HepG2 (cell line): ENCODE measurements at regions of chr7 and their contacts with region 1.

Region 1: GRCh38 chr7:135147899-135148721 is at the start of gene TMEM140:
- DNase-seq: peak; percentile 94
- ATAC-seq: peak; percentile 96
- H3K4me3 ChIP-seq: peak within 1 kb of the TSS; percentile 58 to 71 (median 67)
- H3K27ac ChIP-seq: peak within 1 kb of the TSS; percentile 84
- H3K4me1 ChIP-seq: peaks cover 69% of the 10 kb centered on the region
- H3K27me3 ChIP-seq: no peaks in the 10 kb centered on the region; a peak in 1 of 5 replicates
- CTCF ChIP-seq: no peak; the same call in 1 of the 2 replicates
- EP300 ChIP-seq: peak in 1 of 2 experiments; percentile 72; a peak in 2 of 4 replicates
- POLR2A ChIP-seq: peak; percentile 62 to 66; a peak in 3 of 4 replicates
- RAD21 ChIP-seq: no peak
- total RNA-seq, gene TMEM140: 5.6 and 9.2 TPM in 2 replicates

Region 2: DNA sequence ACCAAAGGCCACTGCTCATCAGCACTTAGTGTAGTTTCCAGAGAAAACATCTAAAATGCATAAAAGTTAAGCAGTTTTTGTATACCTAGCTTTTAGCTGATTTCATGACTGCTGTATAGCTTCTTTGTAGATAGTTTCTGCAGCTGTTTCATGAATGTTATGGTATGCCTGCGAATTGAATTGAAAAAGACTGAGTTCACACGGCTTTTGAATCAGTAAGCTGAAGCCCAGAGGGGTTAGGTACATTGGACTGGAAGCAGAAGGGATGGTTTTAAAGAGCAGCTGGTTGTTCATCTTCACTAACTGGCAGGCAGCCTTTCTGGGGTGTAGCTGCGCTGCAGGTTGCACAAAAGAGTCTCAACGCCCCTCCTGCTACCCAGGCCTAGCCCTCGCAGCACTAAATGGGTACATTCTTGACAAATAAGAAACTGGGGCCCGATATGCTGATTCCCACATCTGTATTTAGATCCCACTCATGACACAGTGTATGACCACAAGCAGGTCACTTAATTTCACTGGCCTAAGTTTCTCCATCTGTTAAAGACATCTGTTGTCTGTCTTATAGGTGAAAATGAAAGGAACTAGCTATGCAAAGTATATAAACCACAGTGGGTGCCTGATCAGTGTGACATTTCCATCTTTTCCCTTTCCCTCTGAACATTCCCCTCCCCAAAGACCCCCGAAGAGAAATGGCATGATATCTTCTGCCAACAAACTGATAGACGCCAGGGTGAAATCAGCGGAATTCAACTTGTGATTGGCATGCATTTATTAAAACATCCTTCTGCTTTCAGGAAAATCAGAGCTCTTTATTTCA is 247.7 kb before region 1 on chr7:
- CTCF ChIA-PET with region 1: no interaction called
- POLR2A ChIA-PET with region 1: interaction called, 6 read pairs
- in situ Hi-C with region 1: no loop called
- intact Hi-C with region 1: loop called (anchors 5 kb)
- DNase-seq: no peak
- ATAC-seq: no peak
- H3K4me3 ChIP-seq: peak overlapping the region in 2 of 3 experiments; percentile 52 to 67; a peak in 1 of 6 replicates
- H3K27ac ChIP-seq: peak overlapping the region; percentile 98
- H3K4me1 ChIP-seq: peaks cover 96% of the 10 kb centered on the region
- H3K27me3 ChIP-seq: no peaks in the 10 kb centered on the region
- CTCF ChIP-seq: no peak
- EP300 ChIP-seq: no peak; a peak in 1 of 4 replicates
- POLR2A ChIP-seq: no peak
- RAD21 ChIP-seq: no peak

Region 3: DNA sequence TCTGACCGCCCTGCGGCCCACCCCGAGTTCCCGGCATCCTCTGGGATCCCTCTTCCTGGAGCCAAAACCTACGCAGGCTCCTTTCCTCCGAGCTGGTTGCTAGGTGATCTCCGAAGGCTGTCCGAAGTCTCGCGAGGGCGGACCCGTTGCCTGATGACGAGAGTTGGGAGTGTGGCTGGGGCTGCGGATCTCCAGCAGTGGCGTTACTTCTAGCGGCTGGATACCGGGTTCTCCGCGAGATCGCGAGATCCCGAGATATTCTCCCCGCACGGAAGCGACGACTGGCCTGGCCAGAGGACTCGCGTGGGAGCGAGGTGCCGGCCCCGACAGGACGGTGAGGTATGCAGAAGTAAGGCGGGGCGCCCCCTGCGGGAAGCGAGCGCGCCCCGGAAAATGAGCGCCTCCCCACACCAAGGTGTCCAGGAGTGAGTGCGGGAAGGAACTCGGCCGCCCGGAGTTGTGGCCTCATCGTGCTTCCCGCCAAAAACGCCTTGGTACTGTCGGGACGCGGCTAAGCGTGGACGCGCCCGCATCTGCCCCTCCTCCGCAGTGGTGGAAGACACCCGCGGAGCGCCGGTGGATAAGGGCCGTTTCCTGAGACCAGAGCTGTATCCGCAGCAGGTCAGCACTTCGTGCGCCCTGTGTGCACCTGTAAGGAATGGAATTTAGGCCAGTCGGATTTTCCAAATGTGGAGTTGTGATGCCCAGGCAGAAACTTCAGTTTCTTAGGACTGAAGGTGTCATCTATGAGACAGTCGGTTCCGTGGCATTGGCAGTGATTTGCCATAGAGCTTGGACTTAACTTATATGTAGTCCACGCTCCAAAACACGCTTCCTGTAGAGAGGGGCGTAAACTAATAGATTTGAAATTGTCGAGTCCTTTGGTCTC is 161.5 kb before region 1 on chr7 and contains the start of gene AGBL3:
- CTCF ChIA-PET with region 1: no interaction called
- POLR2A ChIA-PET with region 1: interaction called, 23 read pairs
- in situ Hi-C with region 1: no loop called
- intact Hi-C with region 1: loop called (anchors 1 kb)
- DNase-seq: peak; percentile 90
- ATAC-seq: peak; percentile 98
- H3K4me3 ChIP-seq: peak within 1 kb of the TSS; percentile 83 to 98 (median 98)
- H3K27ac ChIP-seq: peak within 1 kb of the TSS; percentile 82
- H3K4me1 ChIP-seq: peaks cover 39% of the 10 kb centered on the region
- H3K27me3 ChIP-seq: no peaks in the 10 kb centered on the region; a peak in 2 of 5 replicates
- CTCF ChIP-seq: peak; percentile 88
- EP300 ChIP-seq: no peak
- POLR2A ChIP-seq: peak; percentile 72 to 79; a peak in 3 of 4 replicates
- RAD21 ChIP-seq: peak; percentile 83
- total RNA-seq, gene AGBL3: 5.5 and 7.2 TPM in 2 replicates

Region 4: DNA sequence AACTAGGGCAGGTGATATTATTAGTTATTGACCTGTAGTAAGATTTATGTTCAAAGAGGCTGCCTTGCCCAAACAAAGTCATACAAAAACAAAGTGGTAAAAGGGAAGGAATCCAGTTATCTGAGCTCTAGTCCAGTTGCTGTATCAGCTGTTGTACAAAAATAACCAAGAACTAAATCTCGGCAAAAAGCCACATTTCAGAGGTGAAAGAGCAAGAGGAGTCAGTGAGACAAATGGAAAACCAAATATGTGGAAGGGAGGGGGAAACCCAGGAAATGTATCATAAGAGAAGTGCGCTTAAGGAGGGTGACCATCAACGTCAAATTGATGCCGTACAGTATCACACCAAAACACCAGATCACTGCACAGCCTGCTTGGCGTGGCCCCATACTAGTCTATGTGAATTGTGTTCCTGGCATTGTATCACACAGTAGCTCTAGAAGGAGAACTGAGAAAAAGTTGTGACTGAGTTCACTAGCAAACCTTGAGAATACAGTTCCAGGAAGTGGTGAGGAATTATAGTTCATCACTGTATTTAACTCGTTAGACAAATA is 155.4 kb before region 1 on chr7:
- CTCF ChIA-PET with region 1: no interaction called
- POLR2A ChIA-PET with region 1: interaction called, 14 read pairs
- in situ Hi-C with region 1: no loop called
- intact Hi-C with region 1: loop called (anchors 1 kb)
- DNase-seq: no peak
- ATAC-seq: no peak
- H3K4me3 ChIP-seq: peak overlapping the region in 1 of 3 experiments; percentile 31; a peak in 1 of 6 replicates
- H3K27ac ChIP-seq: peak overlapping the region; percentile 96
- H3K4me1 ChIP-seq: peaks cover 93% of the 10 kb centered on the region
- H3K27me3 ChIP-seq: no peaks in the 10 kb centered on the region; a peak in 1 of 5 replicates
- CTCF ChIP-seq: no peak
- EP300 ChIP-seq: no peak
- POLR2A ChIP-seq: no peak
- RAD21 ChIP-seq: no peak

Region 5: GRCh38 chr7:135095229-135095849 is 52.8 kb before region 1 on chr7:
- CTCF ChIA-PET with region 1: no interaction called
- POLR2A ChIA-PET with region 1: no interaction called
- in situ Hi-C with region 1: no loop called
- intact Hi-C with region 1: loop called (anchors 5 kb)
- DNase-seq: no peak
- ATAC-seq: peak; percentile 28; the same call in 1 of the 3 replicates
- H3K4me3 ChIP-seq: peak overlapping the region in 1 of 3 experiments; percentile 6; a peak in 1 of 6 replicates
- H3K27ac ChIP-seq: no peak overlapping the region
- H3K4me1 ChIP-seq: peaks cover 31% of the 10 kb centered on the region
- H3K27me3 ChIP-seq: no peaks in the 10 kb centered on the region
- CTCF ChIP-seq: no peak
- EP300 ChIP-seq: 0 out of 4 replicates have a peak, but pooled peaks of 1 of the 2 experiments have one; percentile 9
- POLR2A ChIP-seq: no peak
- RAD21 ChIP-seq: no peak

Region 6: DNA sequence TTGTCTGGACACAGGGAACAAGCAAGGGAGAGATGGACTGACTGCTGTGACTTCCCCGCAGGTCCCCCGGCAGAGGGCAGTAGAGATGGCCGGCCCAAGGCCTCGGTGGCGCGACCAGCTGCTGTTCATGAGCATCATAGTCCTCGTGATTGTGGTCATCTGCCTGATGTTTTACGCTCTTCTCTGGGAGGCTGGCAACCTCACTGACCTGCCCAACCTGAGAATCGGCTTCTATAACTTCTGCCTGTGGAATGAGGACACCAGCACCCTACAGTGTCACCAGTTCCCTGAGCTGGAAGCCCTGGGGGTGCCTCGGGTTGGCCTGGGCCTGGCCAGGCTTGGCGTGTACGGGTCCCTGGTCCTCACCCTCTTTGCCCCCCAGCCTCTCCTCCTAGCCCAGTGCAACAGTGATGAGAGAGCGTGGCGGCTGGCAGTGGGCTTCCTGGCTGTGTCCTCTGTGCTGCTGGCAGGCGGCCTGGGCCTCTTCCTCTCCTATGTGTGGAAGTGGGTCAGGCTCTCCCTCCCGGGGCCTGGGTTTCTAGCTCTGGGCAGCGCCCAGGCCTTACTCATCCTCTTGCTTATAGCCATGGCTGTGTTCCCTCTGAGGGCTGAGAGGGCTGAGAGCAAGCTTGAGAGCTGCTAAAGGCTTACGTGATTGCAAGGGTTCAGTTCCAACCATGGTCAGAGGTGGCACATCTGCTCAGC is 16.4 kb after region 1 on chr7:
- CTCF ChIA-PET with region 1: no interaction called
- POLR2A ChIA-PET with region 1: interaction called, 19 read pairs
- in situ Hi-C with region 1: no loop called
- intact Hi-C with region 1: no loop called
- DNase-seq: no peak
- ATAC-seq: peak; percentile 21
- H3K4me3 ChIP-seq: no peak overlapping the region
- H3K27ac ChIP-seq: no peak overlapping the region
- H3K4me1 ChIP-seq: peaks cover 55% of the 10 kb centered on the region
- H3K27me3 ChIP-seq: no peaks in the 10 kb centered on the region; a peak in 1 of 5 replicates
- CTCF ChIP-seq: peak; percentile 34
- EP300 ChIP-seq: no peak
- POLR2A ChIP-seq: peak in 1 of 2 experiments; percentile 44; a peak in 2 of 4 replicates
- RAD21 ChIP-seq: no peak

Region 7: GRCh38 chr7:135170274-135170997 is 22.3 kb after region 1 on chr7 and contains the start of gene CYREN:
- CTCF ChIA-PET with region 1: no interaction called
- POLR2A ChIA-PET with region 1: interaction called, 19 read pairs
- in situ Hi-C with region 1: no loop called
- intact Hi-C with region 1: no loop called
- DNase-seq: peak; percentile 91
- ATAC-seq: peak; percentile 91
- H3K4me3 ChIP-seq: peak within 1 kb of the TSS; percentile 91 to 97 (median 95)
- H3K27ac ChIP-seq: peak within 1 kb of the TSS; percentile 87
- H3K4me1 ChIP-seq: peaks cover 47% of the 10 kb centered on the region
- H3K27me3 ChIP-seq: no peaks in the 10 kb centered on the region; a peak in 1 of 5 replicates
- CTCF ChIP-seq: peak; percentile 95
- EP300 ChIP-seq: peak in 1 of 2 experiments; percentile 48; a peak in 3 of 4 replicates
- POLR2A ChIP-seq: peak; percentile 71 to 78
- RAD21 ChIP-seq: peak; percentile 95
- total RNA-seq, gene CYREN: 60.7 and 68.6 TPM in 2 replicates

Region 8: DNA sequence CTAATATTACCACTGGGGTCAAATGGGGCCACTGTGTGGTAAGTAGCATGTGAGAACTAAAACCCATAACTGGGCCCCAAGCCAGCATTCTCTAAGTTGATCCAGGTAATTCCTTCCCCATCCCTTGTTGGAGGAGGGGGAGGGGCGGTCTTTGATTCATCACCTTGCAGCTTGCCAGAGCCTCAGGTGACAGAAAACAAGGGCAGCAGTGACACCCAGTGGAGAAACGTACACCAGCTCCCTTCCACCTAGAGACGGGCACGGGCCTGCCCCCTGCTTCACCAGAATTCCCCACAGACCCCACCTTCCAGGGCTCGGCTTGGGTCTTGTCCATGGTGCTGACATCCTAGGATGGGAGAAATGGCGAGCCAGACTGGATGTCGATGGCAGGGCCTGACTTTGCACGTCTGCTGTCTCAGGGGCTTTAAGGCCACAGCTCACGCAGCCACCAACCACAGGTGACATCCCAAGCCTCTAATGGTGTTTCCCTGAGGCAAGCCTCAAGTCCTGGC is 187.6 kb after region 1 on chr7:
- CTCF ChIA-PET with region 1: no interaction called
- POLR2A ChIA-PET with region 1: no interaction called
- in situ Hi-C with region 1: no loop called
- intact Hi-C with region 1: no loop called
- DNase-seq: peak; percentile 80
- ATAC-seq: peak; percentile 98
- H3K4me3 ChIP-seq: no peak overlapping the region
- H3K27ac ChIP-seq: no peak overlapping the region
- H3K4me1 ChIP-seq: 0 out of 2 replicates have a peak, but pooled peaks cover under 1% of the 10 kb centered on the region
- H3K27me3 ChIP-seq: no peaks in the 10 kb centered on the region
- CTCF ChIP-seq: peak; percentile 95
- EP300 ChIP-seq: no peak
- POLR2A ChIP-seq: no peak
- RAD21 ChIP-seq: peak; percentile 93

Region 9: GRCh38 chr7:135519233-135519688 is 371.2 kb after region 1 on chr7:
- CTCF ChIA-PET with region 1: no interaction called
- POLR2A ChIA-PET with region 1: no interaction called
- in situ Hi-C with region 1: no loop called
- intact Hi-C with region 1: no loop called
- DNase-seq: no peak
- ATAC-seq: peak; percentile 62
- H3K4me3 ChIP-seq: no peak overlapping the region; a peak in 1 of 6 replicates
- H3K27ac ChIP-seq: no peak overlapping the region
- H3K4me1 ChIP-seq: peaks cover 23% of the 10 kb centered on the region
- H3K27me3 ChIP-seq: no peaks in the 10 kb centered on the region
- CTCF ChIP-seq: no peak
- EP300 ChIP-seq: no peak
- POLR2A ChIP-seq: no peak
- RAD21 ChIP-seq: no peak